HepG2 (cell line): ENCODE measurements at regions of chr3 and their contacts with region 1.

Region 1: GRCh38 chr3:32143849-32144757 is 37.7 kb downstream of the GPD1L start:
- DNase-seq: peak; percentile 78
- ATAC-seq: peak; percentile 84
- H3K4me3 ChIP-seq: no peak overlapping the region
- H3K27ac ChIP-seq: no peak overlapping the region
- H3K4me1 ChIP-seq: peaks cover 25% of the 10 kb centered on the region
- H3K27me3 ChIP-seq: no peaks in the 10 kb centered on the region
- CTCF ChIP-seq: peak; percentile 86
- EP300 ChIP-seq: no peak
- POLR2A ChIP-seq: no peak
- RAD21 ChIP-seq: peak; percentile 76

Region 2: DNA sequence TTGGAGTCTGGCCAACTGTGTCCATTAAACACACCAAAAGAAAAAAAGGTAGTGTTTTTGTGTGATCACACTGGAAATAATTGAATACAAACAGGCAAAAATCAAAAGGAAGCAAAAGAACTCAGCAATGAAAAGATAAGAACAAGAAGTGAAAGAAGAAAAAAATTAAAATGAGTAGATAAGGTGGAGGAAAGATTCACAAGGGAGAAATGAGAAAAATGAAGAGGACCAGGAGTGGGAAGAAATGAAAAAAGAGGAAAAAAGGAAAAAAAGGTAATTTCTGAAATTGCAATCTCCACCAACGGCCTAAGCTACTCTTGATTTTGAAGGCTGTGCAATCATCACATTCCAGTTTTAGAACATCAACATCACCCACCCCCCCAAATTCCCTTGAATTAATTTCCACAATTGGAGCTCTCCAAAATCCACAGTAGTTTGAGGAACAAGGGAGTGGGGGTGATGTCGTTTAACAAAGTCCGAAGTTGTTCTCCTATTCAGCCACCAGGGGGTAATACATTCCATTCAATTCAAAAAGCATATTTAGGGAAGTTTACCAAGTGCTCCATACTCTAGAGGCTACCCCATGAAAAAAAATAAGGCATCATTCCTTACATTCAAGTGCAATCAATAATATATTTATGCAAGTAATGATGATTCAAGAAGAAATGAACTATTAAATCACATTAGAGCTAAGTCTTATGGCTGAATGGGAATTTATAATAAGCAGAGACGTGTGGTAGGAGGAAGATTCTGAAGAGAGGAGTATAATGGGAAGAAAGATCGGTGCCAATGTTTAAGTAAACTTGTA is 125.1 kb before region 1 on chr3:
- CTCF ChIA-PET with region 1: interaction called, 28 read pairs
- POLR2A ChIA-PET with region 1: no interaction called
- in situ Hi-C with region 1: loop called (anchors 5 kb)
- intact Hi-C with region 1: loop called (anchors 1 kb)
- DNase-seq: peak; percentile 52
- ATAC-seq: peak; percentile 85
- H3K4me3 ChIP-seq: no peak overlapping the region; a peak in 1 of 6 replicates
- H3K27ac ChIP-seq: no peak overlapping the region
- H3K4me1 ChIP-seq: peaks cover 19% of the 10 kb centered on the region
- H3K27me3 ChIP-seq: no peaks in the 10 kb centered on the region
- CTCF ChIP-seq: peak; percentile 74
- EP300 ChIP-seq: no peak
- POLR2A ChIP-seq: no peak
- RAD21 ChIP-seq: peak; percentile 59; the same call in 1 of the 2 replicates

Region 3: DNA sequence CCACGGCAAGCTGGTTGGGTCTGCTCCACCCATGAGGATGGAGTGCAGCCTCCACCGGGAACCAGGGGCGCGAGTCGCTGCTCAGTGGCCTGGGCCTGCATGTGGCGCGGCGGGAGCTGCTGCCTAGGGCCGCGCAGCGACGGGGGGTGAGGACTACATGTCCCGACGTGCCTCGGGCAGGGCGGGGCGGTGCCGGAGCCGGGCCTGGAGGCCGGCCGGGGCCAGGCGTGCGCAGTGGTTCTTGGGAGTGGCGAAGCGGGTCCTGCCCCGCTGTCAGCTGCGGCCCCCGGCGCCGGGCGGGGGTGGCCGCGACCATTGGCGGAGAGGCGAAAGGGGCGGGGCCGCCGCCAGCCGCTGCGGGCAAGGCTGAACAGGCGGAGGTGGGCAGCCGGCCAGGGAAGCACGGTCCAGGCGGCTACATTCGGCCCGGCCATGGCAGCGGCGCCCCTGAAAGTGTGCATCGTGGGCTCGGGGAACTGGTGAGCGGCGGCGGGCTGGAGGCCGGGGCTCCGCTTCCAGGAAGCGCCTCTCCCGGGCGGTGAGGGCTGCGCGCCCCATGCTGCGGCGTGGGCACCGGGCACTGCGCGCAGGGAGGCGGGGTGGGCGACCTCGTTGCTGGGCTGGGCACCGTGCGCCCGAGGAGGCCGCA is 37.7 kb before region 1 on chr3 and contains the start of gene GPD1L:
- CTCF ChIA-PET with region 1: no interaction called
- POLR2A ChIA-PET with region 1: no interaction called
- in situ Hi-C with region 1: no loop called
- intact Hi-C with region 1: loop called (anchors 5 kb)
- DNase-seq: peak; percentile 89
- ATAC-seq: peak; percentile 99
- H3K4me3 ChIP-seq: peak within 1 kb of the TSS; percentile 58 to 79 (median 75)
- H3K27ac ChIP-seq: no peak within 1 kb of the TSS
- H3K4me1 ChIP-seq: peaks cover 57% of the 10 kb centered on the region
- H3K27me3 ChIP-seq: no peaks in the 10 kb centered on the region; a peak in 1 of 5 replicates
- CTCF ChIP-seq: peak; percentile 33; the same call in 1 of the 2 replicates
- EP300 ChIP-seq: no peak
- POLR2A ChIP-seq: peak in 1 of 2 experiments; percentile 71; a peak in 2 of 4 replicates
- RAD21 ChIP-seq: no peak
- total RNA-seq, gene GPD1L: 13.7 and 20.1 TPM in 2 replicates